ENCODE measurements at regions of chr12 and their contacts with region 1.

Region 1: DNA sequence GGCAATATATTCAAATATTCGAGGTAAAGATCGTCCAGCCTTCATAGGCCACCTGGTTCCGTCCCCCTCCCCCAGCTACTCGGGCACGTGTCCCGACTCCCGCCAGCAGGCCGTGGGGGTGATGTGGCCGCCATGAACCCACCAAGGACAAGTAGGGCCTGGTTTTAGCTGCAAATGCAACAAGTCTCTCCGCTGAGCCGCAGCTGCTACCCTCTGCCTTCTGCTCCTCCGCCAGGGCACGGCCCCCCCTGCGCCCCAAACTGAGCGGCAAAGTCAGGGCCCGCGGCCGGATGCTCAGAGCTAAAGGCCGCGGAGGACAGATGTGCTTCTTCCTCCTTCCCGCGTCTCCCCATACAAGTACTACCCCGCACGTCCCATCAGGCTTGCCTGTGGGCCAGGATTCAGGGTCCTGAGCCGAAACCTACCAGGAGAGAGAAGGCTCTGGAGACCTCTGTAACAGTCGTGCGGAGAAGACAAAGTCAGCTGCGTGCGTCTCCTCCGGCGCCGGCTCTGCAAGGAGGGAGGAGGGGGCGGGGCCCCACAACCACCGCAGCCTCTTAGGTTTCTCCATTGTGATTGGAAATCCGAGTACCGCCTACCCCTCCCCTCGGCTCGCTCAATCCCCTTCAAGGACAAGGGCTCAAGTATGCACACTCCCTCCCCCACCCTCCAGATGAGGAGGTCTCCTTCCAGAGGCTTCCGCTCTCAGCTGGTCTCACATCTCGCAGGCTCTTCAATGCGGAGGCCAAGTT is at the start of gene LDHB:
- DNase-seq: peak; percentile 88 to 97 (median 90)
- H3K4me3 ChIP-seq: peak within 1 kb of the TSS; percentile 85 to 89
- H3K4me3 Mint-ChIP-seq: peak within 1 kb of the TSS; percentile 93 to 100 (median 100)
- H3K27ac ChIP-seq: peak within 1 kb of the TSS; percentile 71
- H3K27ac Mint-ChIP-seq: peak within 1 kb of the TSS; percentile 94 to 99 (median 98)
- H3K4me1 ChIP-seq: peaks cover 59% of the 10 kb centered on the region
- H3K4me1 Mint-ChIP-seq: peaks cover 33 to 84% (median 51%) of the 10 kb centered on the region in 4 donors
- H3K27me3 ChIP-seq: no peaks in the 10 kb centered on the region
- H3K27me3 Mint-ChIP-seq: no peaks in the 10 kb centered on the region
- total RNA-seq, gene LDHB: 1,100 to 1,180 TPM

Region 2: DNA sequence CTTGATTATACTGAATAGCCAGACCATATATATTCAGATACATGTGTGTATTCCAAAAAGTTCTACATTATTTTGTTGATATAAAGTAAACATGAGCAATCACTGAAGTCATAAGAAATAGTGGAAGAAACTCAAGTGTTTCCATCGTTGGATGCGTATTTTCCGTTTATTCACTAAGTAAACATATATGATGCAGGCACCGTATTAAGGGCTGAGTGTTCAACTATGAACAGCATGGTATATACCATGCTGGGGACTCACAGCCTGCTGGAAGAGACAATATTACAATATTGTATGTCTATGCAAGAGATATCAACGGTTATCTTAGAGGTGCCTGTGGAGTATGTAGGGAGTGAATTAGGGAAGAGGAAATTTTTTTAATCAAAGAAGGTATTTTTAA is 218.9 kb before region 1 on chr12:
- CTCF ChIA-PET with region 1: no interaction called
- POLR2A ChIA-PET with region 1: interaction called, 15 read pairs
- intact Hi-C with region 1: loop called (anchors 5 kb)
- DNase-seq: no peak
- H3K4me3 ChIP-seq: peak overlapping the region; percentile 92 to 94
- H3K4me3 Mint-ChIP-seq: peak overlapping the region; percentile 97 to 100 (median 98)
- H3K27ac ChIP-seq: peak overlapping the region; percentile 81
- H3K27ac Mint-ChIP-seq: peak overlapping the region; percentile 97 to 99 (median 98)
- H3K4me1 ChIP-seq: peaks cover 53% of the 10 kb centered on the region
- H3K4me1 Mint-ChIP-seq: peaks cover 27 to 66% (median 46%) of the 10 kb centered on the region in 4 donors
- H3K27me3 ChIP-seq: no peaks in the 10 kb centered on the region
- H3K27me3 Mint-ChIP-seq: no peaks in the 10 kb centered on the region

Region 3: GRCh38 chr12:21607701-21608100 is 49.8 kb before region 1 on chr12:
- CTCF ChIA-PET with region 1: interaction called, 6 read pairs
- POLR2A ChIA-PET with region 1: interaction called, 20 read pairs
- intact Hi-C with region 1: no loop called
- DNase-seq: peak in 4 of 5 donors; percentile 34 to 40 (median 36)
- H3K4me3 ChIP-seq: no peak overlapping the region
- H3K4me3 Mint-ChIP-seq: no peak overlapping the region
- H3K27ac ChIP-seq: no peak overlapping the region
- H3K27ac Mint-ChIP-seq: no peak overlapping the region
- H3K4me1 ChIP-seq: peaks cover 10% of the 10 kb centered on the region
- H3K4me1 Mint-ChIP-seq: peaks cover 0 to 7% (median 5%) of the 10 kb centered on the region in 4 donors
- H3K27me3 ChIP-seq: no peaks in the 10 kb centered on the region
- H3K27me3 Mint-ChIP-seq: no peaks in the 10 kb centered on the region

Region 4: GRCh38 chr12:21613931-21614330 is 43.6 kb before region 1 on chr12:
- CTCF ChIA-PET with region 1: interaction called, 6 read pairs
- POLR2A ChIA-PET with region 1: interaction called, 27 read pairs
- intact Hi-C with region 1: loop called (anchors 1 kb)
- DNase-seq: no peak
- H3K4me3 ChIP-seq: peak overlapping the region in 1 of 2 donors; percentile 18
- H3K4me3 Mint-ChIP-seq: peak overlapping the region in 6 of 8 donors; percentile 0 to 79 (median 42)
- H3K27ac ChIP-seq: peak overlapping the region; percentile 1
- H3K27ac Mint-ChIP-seq: peak overlapping the region in 6 of 7 donors; percentile 65 to 89 (median 86)
- H3K4me1 ChIP-seq: peaks cover 58% of the 10 kb centered on the region
- H3K4me1 Mint-ChIP-seq: peaks cover 41 to 64% (median 53%) of the 10 kb centered on the region in 4 donors
- H3K27me3 ChIP-seq: no peaks in the 10 kb centered on the region
- H3K27me3 Mint-ChIP-seq: no peaks in the 10 kb centered on the region

Region 5: DNA sequence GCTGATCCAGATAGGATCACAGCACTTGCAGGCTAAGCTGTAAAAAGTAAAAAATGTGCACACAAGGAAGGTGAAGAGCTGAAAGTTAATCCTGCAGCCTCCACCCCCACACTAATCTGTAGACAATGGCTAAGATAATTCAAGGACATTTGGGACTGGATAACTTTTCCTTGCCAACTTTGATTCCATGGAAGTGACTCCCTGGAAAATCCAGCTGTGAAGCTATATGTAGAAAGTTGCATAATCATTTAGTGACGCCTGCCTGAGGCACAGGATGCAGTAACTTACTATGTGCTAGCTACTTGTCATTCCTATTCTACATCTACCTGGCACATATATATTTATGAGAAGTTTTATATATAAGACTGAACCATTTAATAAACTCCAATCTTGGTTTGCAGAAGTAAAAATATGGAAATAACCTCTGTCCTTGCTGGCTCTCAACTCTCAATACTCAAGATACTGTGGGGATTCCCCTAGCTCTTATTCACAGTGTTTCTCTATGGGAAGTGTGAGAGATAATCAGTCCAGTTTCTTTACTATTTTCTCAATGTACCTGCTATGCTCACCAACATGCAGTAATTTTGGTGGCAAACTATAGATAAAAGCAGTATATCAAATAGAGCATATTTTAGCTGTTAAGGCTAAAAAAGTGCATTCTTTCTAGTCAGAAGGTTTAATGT is 14.7 kb before region 1 on chr12:
- CTCF ChIA-PET with region 1: interaction called, 14 read pairs
- POLR2A ChIA-PET with region 1: interaction called, 200 read pairs
- intact Hi-C with region 1: loop called (anchors 1 kb)
- DNase-seq: no peak
- H3K4me3 ChIP-seq: no peak overlapping the region
- H3K4me3 Mint-ChIP-seq: peak overlapping the region in 7 of 8 donors; percentile 25 to 49 (median 36)
- H3K27ac ChIP-seq: no peak overlapping the region
- H3K27ac Mint-ChIP-seq: peak overlapping the region in 6 of 7 donors; percentile 30 to 83 (median 50)
- H3K4me1 ChIP-seq: peaks cover 85% of the 10 kb centered on the region
- H3K4me1 Mint-ChIP-seq: peaks cover 55 to 92% (median 75%) of the 10 kb centered on the region in 4 donors
- H3K27me3 ChIP-seq: no peaks in the 10 kb centered on the region
- H3K27me3 Mint-ChIP-seq: no peaks in the 10 kb centered on the region

Region 6: GRCh38 chr12:21690704-21691368 is 33.3 kb after region 1 on chr12:
- CTCF ChIA-PET with region 1: interaction called, 4 read pairs
- POLR2A ChIA-PET with region 1: interaction called, 23 read pairs
- intact Hi-C with region 1: loop called (anchors 5 kb)
- DNase-seq: peak in 3 of 5 donors; percentile 42 to 45 (median 45)
- H3K4me3 ChIP-seq: no peak overlapping the region
- H3K4me3 Mint-ChIP-seq: peak overlapping the region in 7 of 8 donors; percentile 2 to 77 (median 65)
- H3K27ac ChIP-seq: no peak overlapping the region
- H3K27ac Mint-ChIP-seq: peak overlapping the region; percentile 21 to 91 (median 83)
- H3K4me1 ChIP-seq: peaks cover 28% of the 10 kb centered on the region
- H3K4me1 Mint-ChIP-seq: peaks cover 24 to 32% (median 30%) of the 10 kb centered on the region in 4 donors
- H3K27me3 ChIP-seq: no peaks in the 10 kb centered on the region
- H3K27me3 Mint-ChIP-seq: no peaks in the 10 kb centered on the region

Region 7: DNA sequence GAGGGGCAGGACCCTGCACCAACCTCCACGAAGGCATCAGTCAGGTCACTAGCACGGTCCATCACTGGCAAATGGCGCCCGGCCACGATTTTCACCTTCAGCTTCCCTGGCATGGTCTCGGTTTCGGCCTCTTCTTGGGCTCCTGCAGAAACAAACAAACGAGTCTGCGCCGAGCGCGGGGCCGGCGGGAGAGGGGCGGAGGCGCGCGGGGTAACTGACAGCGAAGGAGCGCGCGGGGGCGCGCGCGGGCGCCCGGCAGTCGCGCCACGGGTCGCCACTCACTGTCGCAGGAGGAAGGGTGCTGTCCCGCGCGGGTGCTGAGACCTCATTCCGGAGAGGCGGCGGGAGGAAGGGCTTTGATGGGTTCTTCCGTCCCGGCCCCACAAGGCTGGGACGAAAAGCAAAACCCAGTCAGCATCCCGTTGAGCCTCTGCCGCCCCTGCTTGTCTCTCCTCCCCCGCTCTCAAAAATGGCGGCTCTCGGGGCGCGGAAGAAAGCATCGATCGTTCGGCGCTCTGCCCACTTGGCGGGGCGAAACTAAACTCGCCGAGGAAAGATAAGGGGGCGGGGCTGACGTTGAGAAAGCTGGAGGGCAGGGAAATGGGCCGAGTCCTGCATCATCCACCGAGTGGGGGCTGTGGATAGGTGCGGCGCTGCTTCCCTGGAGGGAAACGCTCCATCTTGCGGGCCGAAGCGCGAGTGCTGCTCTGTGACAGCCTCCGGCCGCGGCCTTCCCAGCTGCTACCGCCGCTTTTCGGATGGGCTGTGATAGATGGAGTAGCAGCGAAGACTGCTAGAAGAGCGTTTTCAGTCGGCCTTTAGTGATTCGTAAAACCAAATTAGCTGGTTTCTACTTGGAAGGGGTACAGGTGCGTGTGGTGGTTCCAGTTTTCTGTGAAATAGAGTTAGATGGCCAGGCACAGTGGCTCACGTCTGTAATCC is 886.8 kb after region 1 on chr12 and contains the start of gene C2CD5:
- CTCF ChIA-PET with region 1: no interaction called
- POLR2A ChIA-PET with region 1: interaction called, 8 read pairs
- intact Hi-C with region 1: loop called (anchors 1 kb)
- DNase-seq: peak; percentile 95 to 98 (median 96)
- H3K4me3 ChIP-seq: peak within 1 kb of the TSS; percentile 87 to 97
- H3K4me3 Mint-ChIP-seq: peak within 1 kb of the TSS; percentile 89 to 98 (median 94)
- H3K27ac ChIP-seq: peak within 1 kb of the TSS; percentile 78
- H3K27ac Mint-ChIP-seq: peak within 1 kb of the TSS; percentile 95 to 97 (median 96)
- H3K4me1 ChIP-seq: peaks cover 44% of the 10 kb centered on the region
- H3K4me1 Mint-ChIP-seq: peaks cover 29 to 45% (median 36%) of the 10 kb centered on the region in 4 donors
- H3K27me3 ChIP-seq: no peaks in the 10 kb centered on the region
- H3K27me3 Mint-ChIP-seq: peaks cover 0 to 4% of the 10 kb centered on the region in 2 donors
- total RNA-seq, gene C2CD5: 59.3 to 59.8 TPM

Measured in CD4-positive, alpha-beta memory T cell (primary cell).